ENCODE measurements at regions of chr13 and their contacts with region 1.

Region 1: GRCh38 chr13:99995589-99996380 is 14.2 kb downstream of the ZIC2 start:
- DNase-seq: no peak
- ATAC-seq: no peak
- H3K4me3 ChIP-seq: peak overlapping the region in 1 of 4 donors; percentile 19
- H3K27ac ChIP-seq: no peak overlapping the region
- H3K4me1 ChIP-seq: no peaks in the 10 kb centered on the region
- H3K27me3 ChIP-seq: peaks cover 72 to 92% (median 85%) of the 10 kb centered on the region in 3 donors
- CTCF ChIP-seq: no peak
- POLR2A ChIP-seq: no peak

Region 2: GRCh38 chr13:99151516-99151915 is 844.3 kb before region 1 on chr13:
- in situ Hi-C with region 1: no loop called
- intact Hi-C with region 1: no loop called
- DNase-seq: no peak
- ATAC-seq: no peak
- H3K4me3 ChIP-seq: no peak overlapping the region
- H3K27ac ChIP-seq: no peak overlapping the region
- H3K4me1 ChIP-seq: no peaks in the 10 kb centered on the region
- H3K27me3 ChIP-seq: no peaks in the 10 kb centered on the region
- CTCF ChIP-seq: no peak
- POLR2A ChIP-seq: no peak

Region 3: DNA sequence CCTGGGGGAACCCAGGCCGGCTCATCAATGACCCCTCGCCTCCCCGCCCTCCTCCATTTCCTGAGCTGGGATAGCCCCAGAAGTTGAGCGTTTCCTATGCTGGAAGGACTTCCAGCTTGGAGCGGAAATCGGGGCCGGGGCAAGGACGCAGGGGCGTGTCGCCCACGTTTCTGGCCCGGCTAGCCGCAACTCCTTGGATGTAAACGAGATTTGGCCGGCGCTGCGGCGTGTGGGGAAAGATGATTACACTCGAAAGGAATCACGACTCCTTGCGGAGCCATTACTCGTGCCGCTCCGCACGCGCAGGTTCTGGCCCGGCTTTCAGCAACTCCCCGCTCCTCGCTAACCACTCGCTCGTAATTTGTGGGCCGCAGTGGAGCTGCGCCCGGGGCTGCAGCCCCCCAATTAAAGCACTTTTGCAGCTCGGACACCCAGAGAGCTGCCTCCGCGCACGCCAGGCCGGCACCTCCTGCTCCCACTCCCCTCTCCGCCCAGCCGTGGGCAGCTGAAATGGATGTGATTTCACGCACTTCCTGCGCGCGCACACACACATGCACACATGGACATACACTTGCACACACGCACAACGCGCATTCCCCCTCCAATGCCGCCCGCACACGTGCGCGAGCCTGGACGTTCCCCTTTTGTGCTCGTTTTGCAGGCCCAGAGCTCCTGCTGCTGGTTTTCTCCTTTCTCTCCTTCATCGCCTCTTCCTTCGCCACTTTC is 39.9 kb before region 1 on chr13:
- in situ Hi-C with region 1: no loop called
- intact Hi-C with region 1: loop called (anchors 5 kb)
- DNase-seq: no peak
- ATAC-seq: no peak
- H3K4me3 ChIP-seq: peak overlapping the region; percentile 21 to 47 (median 26)
- H3K27ac ChIP-seq: no peak overlapping the region
- H3K4me1 ChIP-seq: peaks cover 24 to 27% of the 10 kb centered on the region in 2 donors
- H3K27me3 ChIP-seq: peaks cover 73 to 95% (median 87%) of the 10 kb centered on the region in 3 donors
- CTCF ChIP-seq: no peak
- POLR2A ChIP-seq: no peak

Region 4: DNA sequence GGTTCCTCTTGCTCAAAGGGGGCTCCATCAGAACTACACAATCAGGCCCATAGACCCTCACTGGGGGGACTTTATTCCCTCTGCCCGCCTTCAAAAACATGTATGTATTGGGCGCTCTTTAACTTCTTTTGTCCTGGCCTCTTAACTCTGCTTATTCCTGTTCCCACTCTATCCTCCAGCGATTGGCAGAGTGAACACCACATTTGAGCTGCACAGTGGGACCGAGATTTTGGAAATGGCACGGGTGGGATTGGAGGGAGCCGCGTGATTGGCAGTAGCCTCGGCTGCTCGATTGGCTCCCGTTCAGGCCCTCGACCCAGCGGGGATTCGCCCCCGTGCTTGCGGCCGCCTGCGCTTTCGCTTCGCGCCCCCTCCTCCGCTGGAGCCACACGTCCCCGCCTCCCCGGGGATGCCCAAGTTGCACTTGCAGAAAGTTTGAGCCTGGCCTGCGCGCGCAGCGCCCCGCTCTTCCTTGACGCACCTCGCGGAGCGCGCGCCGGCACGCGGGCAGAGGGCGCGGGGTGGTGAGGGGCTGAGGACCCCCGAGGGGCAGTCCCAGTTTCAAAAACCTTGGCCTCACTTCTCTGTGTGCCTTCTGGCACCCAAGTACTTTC is 24.1 kb before region 1 on chr13 and contains the start of gene ZIC5:
- in situ Hi-C with region 1: no loop called
- intact Hi-C with region 1: loop called (anchors 2 kb)
- DNase-seq: no peak
- ATAC-seq: no peak
- H3K4me3 ChIP-seq: peak within 1 kb of the TSS in 2 of 4 donors; percentile 12 to 32
- H3K27ac ChIP-seq: no peak within 1 kb of the TSS
- H3K4me1 ChIP-seq: peaks cover 11 to 15% of the 10 kb centered on the region in 2 donors
- H3K27me3 ChIP-seq: peaks cover 88 to 95% (median 94%) of the 10 kb centered on the region in 3 donors
- CTCF ChIP-seq: no peak
- POLR2A ChIP-seq: no peak
- total RNA-seq, gene ZIC5: not detected

Region 5: GRCh38 chr13:100075700-100076587 is 80.2 kb after region 1 on chr13:
- in situ Hi-C with region 1: no loop called
- intact Hi-C with region 1: no loop called
- DNase-seq: no peak
- ATAC-seq: no peak
- H3K4me3 ChIP-seq: no peak overlapping the region
- H3K27ac ChIP-seq: no peak overlapping the region
- H3K4me1 ChIP-seq: no peaks in the 10 kb centered on the region
- H3K27me3 ChIP-seq: no peaks in the 10 kb centered on the region
- CTCF ChIP-seq: no peak
- POLR2A ChIP-seq: no peak

Measured in gastrocnemius medialis (tissue), 4 donors.